Activated B cell treated with CpG ODN at 0.5 μM for 24 hours (primary cell): ENCODE measurements at regions of chr1 and their contacts with region 1.

Region 1: DNA sequence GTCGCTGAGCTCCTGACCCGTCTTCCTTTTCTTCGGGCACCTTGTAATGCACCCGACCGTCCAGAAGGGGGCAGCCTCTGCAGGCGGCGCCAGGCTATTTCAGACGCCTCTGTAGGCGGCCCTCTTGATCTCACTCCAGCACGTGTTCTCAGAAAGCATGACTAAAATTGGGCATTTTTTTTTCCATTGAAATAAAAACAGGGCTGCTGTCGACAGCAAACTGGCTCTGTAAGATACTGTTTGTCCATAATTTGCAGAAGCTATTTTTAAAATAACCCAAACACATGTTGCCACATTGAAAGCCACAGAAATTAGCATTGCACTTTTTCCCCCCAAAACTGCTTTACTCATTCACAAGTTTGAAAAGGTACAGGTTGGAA is 78.0 kb downstream of the STUM start:
- DNase-seq: peak; percentile 68
- ATAC-seq: peak; percentile 93
- H3K4me3 Mint-ChIP-seq: peak overlapping the region; percentile 55
- H3K27ac Mint-ChIP-seq: peak overlapping the region; percentile 59
- H3K4me1 Mint-ChIP-seq: peaks cover 47% of the 10 kb centered on the region
- H3K27me3 Mint-ChIP-seq: no peaks in the 10 kb centered on the region
- CTCF ChIP-seq: peak; percentile 76

Region 2: DNA sequence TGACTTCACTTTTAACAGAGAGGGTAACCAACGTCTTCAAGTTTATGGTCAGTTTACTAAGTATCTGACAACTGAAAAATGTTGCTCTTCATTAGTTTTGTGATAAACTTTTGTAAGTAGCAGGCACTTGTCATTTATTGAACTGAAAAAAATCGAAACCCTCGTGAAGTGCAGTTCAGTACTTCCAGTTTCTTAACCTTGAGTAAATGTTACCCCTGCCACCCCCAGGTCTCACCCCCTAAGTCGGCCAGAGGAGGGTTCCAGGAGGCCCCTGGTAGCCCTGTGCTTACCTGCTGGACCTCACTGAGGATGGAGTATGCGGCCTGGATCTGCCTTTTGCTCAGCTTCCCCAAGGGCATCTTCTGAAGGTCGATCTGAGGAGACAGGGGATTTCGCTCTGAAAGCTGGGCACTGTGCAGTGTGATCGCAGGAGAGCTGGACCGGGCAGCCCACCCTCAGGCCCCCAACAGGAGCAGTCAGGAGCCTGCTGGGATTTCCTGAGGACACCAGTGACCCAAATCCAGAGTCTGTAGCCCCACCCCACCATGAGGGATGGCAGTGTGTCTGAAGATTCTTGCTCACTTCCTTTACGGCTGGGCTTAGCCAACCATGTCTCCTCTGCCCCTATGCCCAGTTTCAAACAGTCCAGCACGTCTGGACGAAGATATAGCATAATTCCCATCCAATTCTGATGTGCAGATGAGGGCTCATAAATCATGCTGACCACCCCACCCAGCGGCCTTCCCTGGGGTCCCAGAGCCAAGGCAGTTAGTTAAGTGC is 256.2 kb before region 1 on chr1:
- CTCF ChIA-PET with region 1: no interaction called
- POLR2A ChIA-PET with region 1: interaction called, 10 read pairs
- intact Hi-C with region 1: no loop called
- DNase-seq: no peak
- ATAC-seq: peak; percentile 74
- H3K4me3 Mint-ChIP-seq: peak overlapping the region; percentile 68
- H3K27ac Mint-ChIP-seq: peak overlapping the region; percentile 91
- H3K4me1 Mint-ChIP-seq: peaks cover 48% of the 10 kb centered on the region
- H3K27me3 Mint-ChIP-seq: no peaks in the 10 kb centered on the region
- CTCF ChIP-seq: no peak

Region 3: DNA sequence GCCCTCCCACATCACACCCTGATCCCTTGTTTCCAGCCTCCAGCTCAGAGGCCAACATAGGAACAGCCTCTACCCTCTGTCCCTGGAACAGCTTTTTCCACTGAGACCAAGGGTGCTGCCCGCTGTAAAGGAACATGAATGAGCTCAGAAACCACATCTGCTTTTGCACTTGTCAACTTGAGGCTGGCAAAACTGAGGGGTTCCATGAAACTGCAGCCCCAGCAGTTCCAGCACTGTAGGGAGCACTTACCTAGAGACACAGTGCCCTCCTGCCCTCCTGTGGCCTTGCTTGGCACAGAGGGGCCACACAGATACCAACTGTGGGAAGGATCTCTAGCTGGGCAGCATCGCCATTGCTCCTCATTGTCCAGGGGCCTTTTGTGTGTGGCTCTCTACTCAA is 60.9 kb after region 1 on chr1:
- CTCF ChIA-PET with region 1: interaction called, 17 read pairs
- POLR2A ChIA-PET with region 1: interaction called, 3 read pairs
- intact Hi-C with region 1: loop called (anchors 1 kb)
- DNase-seq: no peak
- ATAC-seq: peak; percentile 12
- H3K4me3 Mint-ChIP-seq: peak overlapping the region; percentile 61
- H3K27ac Mint-ChIP-seq: peak overlapping the region; percentile 91
- H3K4me1 Mint-ChIP-seq: peaks cover 100% of the 10 kb centered on the region
- H3K27me3 Mint-ChIP-seq: no peaks in the 10 kb centered on the region
- CTCF ChIP-seq: no peak

Region 4: DNA sequence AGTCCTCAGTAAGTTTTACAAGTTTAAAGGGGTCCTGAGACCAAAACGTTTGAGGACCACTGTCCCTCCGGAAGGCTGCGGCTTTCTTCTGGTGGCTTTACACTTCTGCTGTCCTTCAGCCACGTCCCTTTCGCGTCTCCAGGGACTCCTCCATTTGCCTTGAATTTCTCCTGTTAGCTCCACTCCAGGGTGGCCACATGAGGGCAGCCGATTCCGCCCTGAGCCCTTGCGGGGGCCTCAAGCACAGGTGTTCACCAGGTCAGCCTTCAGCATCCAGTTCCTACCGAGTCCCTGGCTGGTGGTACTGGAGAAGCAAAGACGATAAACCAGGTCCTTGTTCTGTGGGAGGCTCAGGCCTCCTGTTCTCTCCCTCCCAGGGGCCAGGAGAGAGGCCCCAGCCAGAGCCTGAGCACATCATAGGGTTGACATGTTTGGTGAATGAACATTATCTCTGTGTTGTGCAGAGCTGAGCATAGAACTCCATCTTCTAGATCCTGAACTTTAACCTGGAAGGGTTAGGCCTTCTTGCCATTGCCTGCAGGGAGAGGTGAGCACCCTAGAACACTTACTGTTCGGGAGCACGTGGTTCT is 286.1 kb after region 1 on chr1:
- CTCF ChIA-PET with region 1: interaction called, 3 read pairs
- POLR2A ChIA-PET with region 1: no interaction called
- intact Hi-C with region 1: loop called (anchors 1 kb)
- DNase-seq: no peak
- ATAC-seq: peak; percentile 42
- H3K4me3 Mint-ChIP-seq: no peak overlapping the region
- H3K27ac Mint-ChIP-seq: no peak overlapping the region
- H3K4me1 Mint-ChIP-seq: no peaks in the 10 kb centered on the region
- H3K27me3 Mint-ChIP-seq: no peaks in the 10 kb centered on the region
- CTCF ChIP-seq: no peak

Region 5: GRCh38 chr1:227437495-227438008 is 811.0 kb after region 1 on chr1:
- CTCF ChIA-PET with region 1: interaction called, 3 read pairs
- POLR2A ChIA-PET with region 1: no interaction called
- intact Hi-C with region 1: loop called (anchors 5 kb)
- DNase-seq: no peak
- ATAC-seq: no peak
- H3K4me3 Mint-ChIP-seq: no peak overlapping the region
- H3K27ac Mint-ChIP-seq: no peak overlapping the region
- H3K4me1 Mint-ChIP-seq: no peaks in the 10 kb centered on the region
- H3K27me3 Mint-ChIP-seq: peaks cover 33% of the 10 kb centered on the region
- CTCF ChIP-seq: no peak